Endothelial cell of umbilical vein (primary cell): ENCODE measurements at regions of chr10 and their contacts with region 1.

Region 1: GRCh38 chr10:22518167-22518724 is 172.9 kb downstream of the SPAG6 start:
- DNase-seq: no peak
- H3K4me3 ChIP-seq: no peak overlapping the region
- H3K27ac ChIP-seq: no peak overlapping the region
- H3K4me1 ChIP-seq: no peaks in the 10 kb centered on the region
- H3K27me3 ChIP-seq: peaks cover 0 to 9% of the 10 kb centered on the region in 2 experiments
- CTCF ChIP-seq: no peak
- POLR2A ChIP-seq: no peak

Region 2: DNA sequence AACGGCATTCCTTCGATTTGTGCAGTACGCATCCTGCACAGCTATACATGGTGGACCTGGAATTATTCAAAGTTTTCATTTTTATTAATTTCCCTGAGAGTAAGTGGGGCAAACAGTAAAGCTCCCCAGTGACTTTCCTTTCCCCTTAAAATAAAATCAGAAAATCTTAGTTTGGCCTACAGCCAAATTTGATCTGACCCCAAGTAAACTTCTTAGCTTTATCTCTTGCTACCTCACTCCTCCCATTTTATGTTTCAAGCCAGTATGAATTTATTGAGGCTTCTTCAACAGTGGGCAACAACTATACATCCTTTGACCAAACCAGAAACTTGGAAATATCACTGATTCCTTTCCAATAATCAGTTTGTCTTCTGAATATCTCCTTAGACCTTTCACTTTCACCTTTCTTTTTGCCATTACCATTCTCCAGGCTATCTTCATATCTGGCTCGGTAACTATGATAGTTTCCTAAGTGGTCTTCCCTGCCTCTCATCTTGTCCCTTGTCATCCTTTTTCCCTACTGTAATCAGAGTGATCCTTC is 161.8 kb before region 1 on chr10:
- CTCF ChIA-PET with region 1: no interaction called
- POLR2A ChIA-PET with region 1: no interaction called
- dilution Hi-C with region 1: no loop called
- intact Hi-C with region 1: no loop called
- DNase-seq: no peak
- H3K4me3 ChIP-seq: no peak overlapping the region
- H3K27ac ChIP-seq: no peak overlapping the region
- H3K4me1 ChIP-seq: no peaks in the 10 kb centered on the region
- H3K27me3 ChIP-seq: peaks cover 4 to 5% of the 10 kb centered on the region in 2 experiments
- CTCF ChIP-seq: no peak
- POLR2A ChIP-seq: no peak

Region 3: DNA sequence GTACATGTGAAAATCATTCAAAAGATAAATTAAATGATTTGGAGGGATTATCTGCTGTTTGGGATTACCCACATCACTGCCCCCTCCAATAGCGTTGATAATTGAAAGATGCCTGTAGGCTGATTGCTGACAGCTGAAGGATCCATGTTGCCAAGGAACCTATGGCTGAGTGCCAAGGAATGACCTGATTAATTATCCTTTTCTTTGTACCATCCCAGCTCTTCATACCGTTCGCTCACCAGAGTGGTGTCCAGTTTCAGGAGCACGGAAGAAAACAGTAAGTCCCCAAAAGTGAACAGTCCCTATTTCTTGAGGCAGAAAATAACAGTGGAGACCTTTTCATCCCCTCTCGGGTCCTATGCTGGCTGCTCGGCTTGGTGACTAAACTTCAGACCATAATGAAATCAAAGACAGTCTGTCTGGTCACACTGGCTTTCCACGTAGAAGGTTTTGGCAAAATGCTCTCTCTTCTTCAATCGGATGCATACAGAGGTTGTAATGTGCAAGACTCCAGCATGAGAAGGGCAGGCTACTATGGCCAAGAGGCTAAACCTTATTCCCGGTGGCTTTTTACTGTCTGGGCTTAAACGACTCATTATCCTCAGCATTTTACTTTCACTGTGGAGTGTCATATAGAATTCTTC is 64.2 kb before region 1 on chr10:
- CTCF ChIA-PET with region 1: no interaction called
- POLR2A ChIA-PET with region 1: no interaction called
- dilution Hi-C with region 1: no loop called
- intact Hi-C with region 1: no loop called
- DNase-seq: no peak
- H3K4me3 ChIP-seq: no peak overlapping the region
- H3K27ac ChIP-seq: no peak overlapping the region
- H3K4me1 ChIP-seq: no peaks in the 10 kb centered on the region
- H3K27me3 ChIP-seq: peaks cover 3 to 8% of the 10 kb centered on the region in 2 experiments
- CTCF ChIP-seq: no peak
- POLR2A ChIP-seq: no peak

Region 4: DNA sequence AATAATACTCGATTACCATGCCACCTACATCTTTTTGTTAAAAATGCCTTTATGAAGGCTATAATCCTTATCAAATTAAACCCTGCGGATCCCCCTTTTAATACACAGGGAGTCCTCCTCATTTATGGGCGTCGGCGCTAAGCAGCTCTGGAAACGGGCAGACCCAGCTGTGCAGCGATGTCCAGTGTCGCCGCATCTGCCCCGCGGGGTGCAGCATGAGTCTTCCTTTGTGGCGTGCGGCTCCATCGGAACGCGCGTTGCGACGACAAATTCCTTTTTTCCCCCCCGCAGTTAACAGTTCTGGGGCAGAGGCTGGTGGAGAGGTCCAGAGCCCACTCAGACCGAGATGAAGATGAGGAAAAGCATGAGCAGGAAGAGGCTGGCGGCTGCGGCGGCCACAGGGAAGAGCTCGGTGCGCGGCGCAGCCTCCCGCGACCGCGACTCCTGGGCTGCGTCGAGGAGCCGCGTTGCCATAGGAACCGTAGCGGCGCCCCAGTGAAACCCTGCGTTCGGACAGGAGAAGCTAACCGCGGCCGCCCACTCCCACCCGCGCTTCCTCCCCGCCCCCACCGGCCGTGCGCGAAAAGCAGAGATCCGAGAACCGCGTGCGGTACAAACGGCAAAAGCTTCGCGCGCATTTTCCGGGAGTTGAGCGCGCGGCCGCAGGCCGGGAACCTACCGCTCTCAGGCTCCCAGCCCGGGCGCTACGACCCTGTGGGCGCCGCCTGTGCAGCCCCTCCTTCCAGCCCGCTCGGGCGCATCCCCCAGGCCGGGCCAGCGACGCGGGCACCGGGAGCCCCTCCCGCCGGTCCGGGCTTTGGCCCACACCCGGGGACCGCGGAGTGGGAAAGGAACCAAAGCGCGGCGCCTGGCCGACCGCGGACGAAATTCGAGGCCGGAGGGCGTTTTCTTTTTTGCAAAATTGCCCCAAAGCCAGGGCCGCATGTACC is 42.3 kb before region 1 on chr10:
- CTCF ChIA-PET with region 1: no interaction called
- POLR2A ChIA-PET with region 1: no interaction called
- dilution Hi-C with region 1: no loop called
- intact Hi-C with region 1: loop called (anchors 5 kb)
- DNase-seq: no peak
- H3K4me3 ChIP-seq: peak overlapping the region in 1 of 3 experiments; percentile 31
- H3K27ac ChIP-seq: no peak overlapping the region
- H3K4me1 ChIP-seq: peaks cover 8% of the 10 kb centered on the region
- H3K27me3 ChIP-seq: peaks cover 73 to 87% of the 10 kb centered on the region in 2 experiments
- CTCF ChIP-seq: no peak
- POLR2A ChIP-seq: no peak

Region 5: GRCh38 chr10:22589851-22590514 is 71.7 kb after region 1 on chr10:
- CTCF ChIA-PET with region 1: no interaction called
- POLR2A ChIA-PET with region 1: no interaction called
- dilution Hi-C with region 1: no loop called
- intact Hi-C with region 1: no loop called
- DNase-seq: no peak
- H3K4me3 ChIP-seq: no peak overlapping the region
- H3K27ac ChIP-seq: no peak overlapping the region
- H3K4me1 ChIP-seq: no peaks in the 10 kb centered on the region
- H3K27me3 ChIP-seq: no peaks in the 10 kb centered on the region
- CTCF ChIP-seq: no peak
- POLR2A ChIP-seq: no peak